Activated naive CD4-positive, alpha-beta T cell treated with anti-CD3 and anti-CD28 coated beads for 36 hours (primary cell): ENCODE measurements at regions of chr2 and their contacts with region 1.

Region 1: GRCh38 chr2:105114551-105114950 is 76.7 kb downstream of the MRPS9 start:
- DNase-seq: no peak
- H3K4me3 Mint-ChIP-seq: no peak overlapping the region
- H3K27ac Mint-ChIP-seq: no peak overlapping the region
- H3K4me1 Mint-ChIP-seq: no peaks in the 10 kb centered on the region
- H3K27me3 Mint-ChIP-seq: no peaks in the 10 kb centered on the region

Region 2: DNA sequence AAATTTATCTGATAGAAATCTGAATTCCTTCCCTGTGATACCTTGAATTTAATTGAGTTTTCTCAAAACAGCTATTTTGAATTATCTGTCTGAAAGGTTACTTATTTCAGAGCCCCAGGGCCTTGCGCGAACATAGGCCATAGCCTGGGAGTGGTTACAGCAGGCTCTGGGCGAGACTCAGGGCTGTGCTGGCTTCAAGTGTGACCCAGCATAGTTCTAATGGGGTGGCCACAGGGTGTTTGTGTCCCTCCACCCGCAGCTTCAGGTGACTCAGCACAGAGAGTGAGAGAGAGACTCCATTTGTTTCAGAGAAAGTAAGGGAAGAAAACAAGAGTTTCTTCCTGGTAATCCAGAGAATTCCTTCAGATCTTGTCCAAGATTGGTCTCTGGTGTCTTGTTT is 398.5 kb before region 1 on chr2:
- CTCF ChIA-PET with region 1: no interaction called
- intact Hi-C with region 1: no loop called
- DNase-seq: no peak
- H3K4me3 Mint-ChIP-seq: no peak overlapping the region
- H3K27ac Mint-ChIP-seq: no peak overlapping the region
- H3K4me1 Mint-ChIP-seq: no peaks in the 10 kb centered on the region
- H3K27me3 Mint-ChIP-seq: peaks cover 10% of the 10 kb centered on the region

Region 3: GRCh38 chr2:105129722-105130232 is 15.2 kb after region 1 on chr2:
- CTCF ChIA-PET with region 1: interaction called, 10 read pairs
- intact Hi-C with region 1: no loop called
- DNase-seq: no peak
- H3K4me3 Mint-ChIP-seq: no peak overlapping the region
- H3K27ac Mint-ChIP-seq: no peak overlapping the region
- H3K4me1 Mint-ChIP-seq: no peaks in the 10 kb centered on the region
- H3K27me3 Mint-ChIP-seq: peaks cover 6% of the 10 kb centered on the region

Region 4: GRCh38 chr2:105235388-105236054 is 121.0 kb after region 1 on chr2:
- CTCF ChIA-PET with region 1: interaction called, 263 read pairs
- intact Hi-C with region 1: loop called (anchors 1 kb)
- DNase-seq: peak; percentile 85
- H3K4me3 Mint-ChIP-seq: no peak overlapping the region
- H3K27ac Mint-ChIP-seq: no peak overlapping the region
- H3K4me1 Mint-ChIP-seq: peaks cover 24% of the 10 kb centered on the region
- H3K27me3 Mint-ChIP-seq: peaks cover 7% of the 10 kb centered on the region

Region 5: DNA sequence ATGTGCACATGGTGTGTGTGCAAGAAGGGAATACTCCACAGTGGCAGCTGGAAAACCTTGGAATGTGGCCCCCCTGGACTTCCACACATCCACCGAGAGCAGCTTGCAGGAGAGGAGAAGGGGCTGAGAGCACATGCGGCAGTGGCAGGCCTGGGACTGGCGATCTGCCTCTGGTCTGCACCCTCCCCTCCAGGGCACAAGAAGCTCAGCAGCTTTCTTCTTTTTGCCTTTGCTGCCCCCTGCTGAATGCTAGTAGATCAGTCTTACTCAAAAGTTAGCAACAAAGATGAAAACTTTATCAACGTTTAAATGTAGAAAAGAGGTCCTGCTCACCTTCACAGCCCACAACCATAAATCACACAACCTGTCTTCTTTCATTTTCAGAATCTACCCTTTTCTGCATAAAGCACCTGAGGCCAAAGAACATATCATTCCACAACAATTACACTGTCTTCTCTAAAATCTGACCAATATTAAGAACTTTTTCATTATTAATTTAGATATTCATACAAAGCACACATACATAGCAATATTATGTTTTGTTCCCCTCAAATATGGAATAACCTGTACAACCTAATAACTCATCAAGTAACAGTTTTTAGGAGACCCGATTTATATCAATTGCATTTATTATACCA is 180.4 kb after region 1 on chr2:
- CTCF ChIA-PET with region 1: no interaction called
- intact Hi-C with region 1: loop called (anchors 2 kb)
- DNase-seq: peak; percentile 55
- H3K4me3 Mint-ChIP-seq: no peak overlapping the region
- H3K27ac Mint-ChIP-seq: no peak overlapping the region
- H3K4me1 Mint-ChIP-seq: no peaks in the 10 kb centered on the region
- H3K27me3 Mint-ChIP-seq: no peaks in the 10 kb centered on the region

Region 6: DNA sequence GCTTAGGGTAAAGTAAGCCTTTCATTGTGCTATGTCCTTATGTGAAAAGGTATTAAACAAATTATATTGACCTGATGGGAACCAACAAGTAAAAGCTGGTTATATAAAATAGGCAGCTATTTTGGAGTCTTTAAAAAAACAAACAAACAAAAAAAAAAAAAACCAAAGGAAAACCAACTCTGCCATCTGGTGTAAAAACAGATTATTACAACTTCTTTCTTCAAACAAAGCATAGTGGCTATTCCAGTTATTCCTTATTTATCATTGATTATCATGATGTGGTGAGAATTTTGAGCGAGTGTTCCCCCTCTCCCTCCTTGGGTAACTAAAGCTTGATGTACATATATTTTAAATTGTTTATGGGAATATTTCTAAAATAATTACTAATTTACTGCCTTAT is 406.7 kb after region 1 on chr2:
- CTCF ChIA-PET with region 1: interaction called, 7 read pairs
- intact Hi-C with region 1: loop called (anchors 10 kb)
- DNase-seq: no peak
- H3K4me3 Mint-ChIP-seq: no peak overlapping the region
- H3K27ac Mint-ChIP-seq: no peak overlapping the region
- H3K4me1 Mint-ChIP-seq: no peaks in the 10 kb centered on the region
- H3K27me3 Mint-ChIP-seq: no peaks in the 10 kb centered on the region